ENCODE measurements at regions of chr11 and their contacts with region 1.

Region 1: GRCh38 chr11:95790123-95790932 is at the start of gene CEP57:
- DNase-seq: peak; percentile 97
- ATAC-seq: peak; percentile 69
- H3K4me3 Mint-ChIP-seq: peak within 1 kb of the TSS; percentile 99
- H3K27ac Mint-ChIP-seq: peak within 1 kb of the TSS; percentile 100
- H3K4me1 Mint-ChIP-seq: peaks cover 55% of the 10 kb centered on the region
- H3K27me3 Mint-ChIP-seq: no peaks in the 10 kb centered on the region
- total RNA-seq, gene CEP57: 85.4 to 86.6 TPM

Region 2: GRCh38 chr11:95778699-95779098 is 11.6 kb before region 1 on chr11:
- CTCF ChIA-PET with region 1: interaction called, 5 read pairs
- POLR2A ChIA-PET with region 1: interaction called, 17 read pairs
- DNase-seq: no peak
- ATAC-seq: no peak
- H3K4me3 Mint-ChIP-seq: no peak overlapping the region
- H3K27ac Mint-ChIP-seq: no peak overlapping the region
- H3K4me1 Mint-ChIP-seq: peaks cover 27% of the 10 kb centered on the region
- H3K27me3 Mint-ChIP-seq: no peaks in the 10 kb centered on the region

Region 3: GRCh38 chr11:95802806-95803205 is 12.5 kb after region 1 on chr11:
- CTCF ChIA-PET with region 1: interaction called, 13 read pairs
- POLR2A ChIA-PET with region 1: interaction called, 17 read pairs
- DNase-seq: no peak
- ATAC-seq: no peak
- H3K4me3 Mint-ChIP-seq: no peak overlapping the region
- H3K27ac Mint-ChIP-seq: no peak overlapping the region
- H3K4me1 Mint-ChIP-seq: peaks cover 3% of the 10 kb centered on the region
- H3K27me3 Mint-ChIP-seq: no peaks in the 10 kb centered on the region

Region 4: GRCh38 chr11:95937358-95937757 is 147.0 kb after region 1 on chr11:
- CTCF ChIA-PET with region 1: no interaction called
- POLR2A ChIA-PET with region 1: no interaction called
- DNase-seq: no peak
- ATAC-seq: no peak
- H3K4me3 Mint-ChIP-seq: no peak overlapping the region
- H3K27ac Mint-ChIP-seq: no peak overlapping the region
- H3K4me1 Mint-ChIP-seq: no peaks in the 10 kb centered on the region
- H3K27me3 Mint-ChIP-seq: no peaks in the 10 kb centered on the region

Region 5: DNA sequence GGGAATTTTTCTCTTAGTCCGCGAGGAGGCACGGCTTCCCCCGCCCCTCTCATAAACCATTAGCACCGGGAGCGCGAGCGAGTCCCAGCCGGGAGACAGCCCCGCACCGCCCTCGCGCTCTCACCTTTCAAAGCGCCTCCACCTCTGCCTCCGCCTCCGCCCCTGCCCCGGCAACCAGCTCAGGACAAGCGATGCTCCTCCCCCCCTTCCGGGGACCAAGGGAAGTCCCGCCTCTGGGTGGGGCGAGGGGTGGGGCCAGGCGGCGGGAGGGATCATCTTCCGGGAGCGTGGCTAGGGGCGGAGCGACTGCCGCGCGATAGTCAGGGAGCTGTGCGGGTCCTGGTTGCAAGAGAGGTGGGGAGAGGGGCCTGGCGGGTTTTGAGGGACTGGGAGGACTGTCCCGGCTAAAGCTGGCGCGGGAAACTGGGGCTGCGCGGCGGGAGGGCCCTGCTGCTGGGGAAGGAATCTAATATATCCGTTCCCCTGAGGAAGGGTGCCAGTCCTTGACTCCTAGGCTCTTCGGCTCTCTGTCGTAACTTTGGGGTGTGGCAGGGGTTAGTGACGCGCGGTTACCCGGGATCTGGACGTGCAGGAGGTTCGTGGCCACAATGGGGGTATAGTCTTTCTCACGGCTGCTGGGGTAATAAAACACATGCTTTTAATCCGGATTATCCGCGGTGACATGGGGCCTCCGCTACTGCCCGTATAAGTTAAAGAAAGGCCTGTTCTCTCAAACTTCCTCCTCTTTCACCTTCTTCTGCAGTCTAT is 599.6 kb after region 1 on chr11 and contains the starts of genes CCDC82 and JRKL:
- CTCF ChIA-PET with region 1: interaction called, 6 read pairs
- POLR2A ChIA-PET with region 1: interaction called, 42 read pairs
- DNase-seq: peak; percentile 98
- ATAC-seq: peak; percentile 95
- H3K4me3 Mint-ChIP-seq: peak within 1 kb of the TSS; percentile 91
- H3K27ac Mint-ChIP-seq: peak within 1 kb of the TSS; percentile 97
- H3K4me1 Mint-ChIP-seq: peaks cover 59% of the 10 kb centered on the region
- H3K27me3 Mint-ChIP-seq: no peaks in the 10 kb centered on the region
- total RNA-seq, gene CCDC82: 35.7 to 37.5 TPM
- total RNA-seq, gene JRKL: 9.4 to 10.3 TPM